Esophagus squamous epithelium (tissue), 5 donors: ENCODE measurements at regions of chr1 and their contacts with region 1.

Region 1: DNA sequence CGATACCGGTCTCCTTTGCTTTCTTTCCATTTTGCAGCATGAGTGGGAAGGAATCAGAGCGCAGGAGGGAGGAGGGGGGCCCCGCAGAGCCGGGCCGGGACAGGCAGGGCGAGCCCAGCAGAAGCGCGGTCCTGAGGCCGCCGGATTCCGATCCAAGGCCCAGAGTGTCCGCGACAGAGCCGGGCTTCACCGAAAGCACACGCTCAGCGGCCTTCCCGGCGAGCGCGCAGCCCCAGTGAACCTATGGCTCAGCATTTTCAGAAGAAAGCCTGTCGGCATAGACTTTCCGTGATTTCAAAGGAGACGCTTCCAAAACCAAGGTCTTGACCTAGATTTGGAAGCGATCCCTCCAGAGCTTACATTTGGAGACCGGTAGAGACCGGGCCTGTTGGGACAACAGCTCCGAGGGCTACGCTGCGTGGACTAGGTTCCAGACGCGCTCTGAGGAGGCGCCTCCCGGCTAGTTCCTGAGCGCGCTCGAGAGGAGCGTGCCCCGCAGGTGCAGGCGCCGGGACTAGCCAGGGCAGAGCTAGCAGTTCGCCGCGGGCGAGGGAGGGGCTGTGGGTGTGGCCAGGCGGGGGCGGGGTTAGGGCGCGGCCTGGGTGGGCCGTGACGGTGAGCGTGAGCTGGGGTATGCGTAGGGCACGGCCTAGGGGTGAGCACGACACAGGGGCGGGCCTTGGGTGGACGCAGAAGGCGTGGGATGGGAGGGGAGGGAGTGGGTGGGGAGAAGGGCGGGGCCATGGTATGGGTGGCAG is 27.8 kb upstream of the PRSS38 start:
- DNase-seq: peak; percentile 74
- H3K4me3 ChIP-seq: peak overlapping the region; percentile 47 to 87 (median 74)
- H3K27ac ChIP-seq: peak overlapping the region; percentile 80 to 95 (median 87)
- H3K4me1 ChIP-seq: peaks cover 13 to 63% (median 19%) of the 10 kb centered on the region in 3 donors
- H3K27me3 ChIP-seq: peaks cover 0 to 14% (median 0%) of the 10 kb centered on the region in 4 donors
- CTCF ChIP-seq: peak in 1 of 6 experiments; percentile 9
- POLR2A ChIP-seq: peak in 1 of 4 donors; percentile 68

Region 2: GRCh38 chr1:227886993-227887696 is 99.5 kb after region 1 on chr1:
- intact Hi-C with region 1: loop called (anchors 5 kb)
- DNase-seq: no peak
- H3K4me3 ChIP-seq: peak overlapping the region; percentile 23 to 74 (median 51)
- H3K27ac ChIP-seq: peak overlapping the region; percentile 83 to 92 (median 88)
- H3K4me1 ChIP-seq: peaks cover 27 to 56% (median 30%) of the 10 kb centered on the region in 3 donors
- H3K27me3 ChIP-seq: no peaks in the 10 kb centered on the region
- CTCF ChIP-seq: no peak
- POLR2A ChIP-seq: no peak

Region 3: GRCh38 chr1:228082135-228082891 is 294.6 kb after region 1 on chr1 and contains the start of gene ARF1:
- intact Hi-C with region 1: loop called (anchors 10 kb)
- DNase-seq: peak; percentile 54
- H3K4me3 ChIP-seq: peak within 1 kb of the TSS; percentile 79 to 100 (median 98)
- H3K27ac ChIP-seq: peak within 1 kb of the TSS; percentile 99 to 100 (median 100)
- H3K4me1 ChIP-seq: peaks cover 41 to 59% (median 57%) of the 10 kb centered on the region in 3 donors
- H3K27me3 ChIP-seq: no peaks in the 10 kb centered on the region
- CTCF ChIP-seq: peak in 2 of 6 experiments; percentile 27 to 57
- POLR2A ChIP-seq: peak in 3 of 4 donors; percentile 70 to 97 (median 88)
- total RNA-seq, gene ARF1: 279 to 327 (median 319) TPM